Activated CD8-positive, alpha-beta T cell treated with anti-CD3 and anti-CD28 coated beads for 36 hours (primary cell): ENCODE measurements at regions of chr12 and their contacts with region 1.

Region 1: GRCh38 chr12:121443193-121443870 is 43.4 kb downstream of the RNF34 start:
- DNase-seq: peak; percentile 79
- ATAC-seq: peak; percentile 79
- H3K4me3 Mint-ChIP-seq: no peak overlapping the region
- H3K27ac Mint-ChIP-seq: peak overlapping the region; percentile 74
- H3K4me1 Mint-ChIP-seq: peaks cover 16% of the 10 kb centered on the region
- H3K27me3 Mint-ChIP-seq: no peaks in the 10 kb centered on the region
- CTCF ChIP-seq: peak; percentile 90

Region 2: GRCh38 chr12:121325922-121326396 is 117.4 kb before region 1 on chr12:
- CTCF ChIA-PET with region 1: interaction called, 80 read pairs
- POLR2A ChIA-PET with region 1: no interaction called
- intact Hi-C with region 1: loop called (anchors 10 kb)
- DNase-seq: no peak
- ATAC-seq: no peak
- H3K4me3 Mint-ChIP-seq: no peak overlapping the region
- H3K27ac Mint-ChIP-seq: no peak overlapping the region
- H3K4me1 Mint-ChIP-seq: no peaks in the 10 kb centered on the region
- H3K27me3 Mint-ChIP-seq: no peaks in the 10 kb centered on the region
- CTCF ChIP-seq: no peak

Region 3: GRCh38 chr12:121399391-121400331 is 43.7 kb before region 1 on chr12 and contains the start of gene RNF34:
- CTCF ChIA-PET with region 1: interaction called, 13 read pairs
- POLR2A ChIA-PET with region 1: interaction called, 4 read pairs
- intact Hi-C with region 1: no loop called
- DNase-seq: peak; percentile 99
- ATAC-seq: peak; percentile 92
- H3K4me3 Mint-ChIP-seq: peak within 1 kb of the TSS; percentile 85
- H3K27ac Mint-ChIP-seq: peak within 1 kb of the TSS; percentile 93
- H3K4me1 Mint-ChIP-seq: peaks cover 26% of the 10 kb centered on the region
- H3K27me3 Mint-ChIP-seq: no peaks in the 10 kb centered on the region
- CTCF ChIP-seq: no peak
- total RNA-seq, gene RNF34: 44.1 to 44.9 TPM

Region 4: DNA sequence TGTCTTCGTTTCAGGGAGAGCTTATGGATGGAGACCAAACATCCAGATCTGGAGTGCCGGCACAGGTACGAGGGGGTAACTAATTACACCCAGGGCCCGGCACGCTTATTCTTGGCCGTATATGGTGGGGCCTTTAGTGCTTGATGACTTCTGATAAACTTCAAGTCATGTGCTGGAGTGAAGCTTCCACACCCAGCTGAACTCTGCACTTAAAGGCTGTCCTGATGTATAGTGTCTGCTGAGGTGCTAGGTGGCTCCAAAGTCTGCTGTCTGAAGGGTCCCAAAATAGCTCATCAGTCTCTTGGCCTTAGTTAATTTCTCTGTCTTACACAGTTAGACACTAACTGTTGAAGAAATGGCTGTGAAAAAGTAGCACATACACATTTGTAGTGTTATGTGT is 25.5 kb before region 1 on chr12:
- CTCF ChIA-PET with region 1: interaction called, 19 read pairs
- POLR2A ChIA-PET with region 1: interaction called, 4 read pairs
- intact Hi-C with region 1: no loop called
- DNase-seq: no peak
- ATAC-seq: no peak
- H3K4me3 Mint-ChIP-seq: no peak overlapping the region
- H3K27ac Mint-ChIP-seq: no peak overlapping the region
- H3K4me1 Mint-ChIP-seq: peaks cover 17% of the 10 kb centered on the region
- H3K27me3 Mint-ChIP-seq: no peaks in the 10 kb centered on the region
- CTCF ChIP-seq: no peak

Region 5: GRCh38 chr12:121432740-121433480 is 10.4 kb before region 1 on chr12:
- CTCF ChIA-PET with region 1: interaction called, 75 read pairs
- POLR2A ChIA-PET with region 1: interaction called, 6 read pairs
- intact Hi-C with region 1: no loop called
- DNase-seq: no peak
- ATAC-seq: no peak
- H3K4me3 Mint-ChIP-seq: no peak overlapping the region
- H3K27ac Mint-ChIP-seq: peak overlapping the region; percentile 60
- H3K4me1 Mint-ChIP-seq: peaks cover 2% of the 10 kb centered on the region
- H3K27me3 Mint-ChIP-seq: no peaks in the 10 kb centered on the region
- CTCF ChIP-seq: no peak

Region 6: GRCh38 chr12:121461048-121461447 is 17.7 kb after region 1 on chr12:
- CTCF ChIA-PET with region 1: interaction called, 16 read pairs
- POLR2A ChIA-PET with region 1: interaction called, 5 read pairs
- intact Hi-C with region 1: no loop called
- DNase-seq: no peak
- ATAC-seq: no peak
- H3K4me3 Mint-ChIP-seq: no peak overlapping the region
- H3K27ac Mint-ChIP-seq: peak overlapping the region; percentile 11
- H3K4me1 Mint-ChIP-seq: peaks cover 63% of the 10 kb centered on the region
- H3K27me3 Mint-ChIP-seq: no peaks in the 10 kb centered on the region
- CTCF ChIP-seq: no peak

Region 7: DNA sequence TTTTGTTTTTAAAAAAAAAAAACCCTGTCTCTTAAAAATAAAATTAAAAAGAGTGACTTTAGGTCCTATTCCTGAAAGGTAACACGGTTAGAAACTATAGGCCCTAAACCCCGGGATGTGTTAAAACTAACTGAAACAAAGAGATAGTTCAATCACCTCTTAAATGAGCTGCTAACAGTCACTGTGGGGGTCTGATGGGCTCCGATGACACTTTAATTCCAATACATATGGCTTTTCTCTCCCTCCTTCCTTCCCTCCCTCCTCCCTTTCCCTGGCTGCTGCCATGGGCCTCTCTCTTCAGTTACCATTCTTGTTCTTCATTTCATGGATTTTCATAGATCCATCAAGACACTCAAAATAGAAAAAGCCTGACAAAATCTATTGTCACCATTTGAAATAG is 33.1 kb after region 1 on chr12:
- CTCF ChIA-PET with region 1: interaction called, 22 read pairs
- POLR2A ChIA-PET with region 1: no interaction called
- intact Hi-C with region 1: no loop called
- DNase-seq: no peak
- ATAC-seq: no peak
- H3K4me3 Mint-ChIP-seq: no peak overlapping the region
- H3K27ac Mint-ChIP-seq: no peak overlapping the region
- H3K4me1 Mint-ChIP-seq: peaks cover 2% of the 10 kb centered on the region
- H3K27me3 Mint-ChIP-seq: no peaks in the 10 kb centered on the region
- CTCF ChIP-seq: no peak

Region 8: DNA sequence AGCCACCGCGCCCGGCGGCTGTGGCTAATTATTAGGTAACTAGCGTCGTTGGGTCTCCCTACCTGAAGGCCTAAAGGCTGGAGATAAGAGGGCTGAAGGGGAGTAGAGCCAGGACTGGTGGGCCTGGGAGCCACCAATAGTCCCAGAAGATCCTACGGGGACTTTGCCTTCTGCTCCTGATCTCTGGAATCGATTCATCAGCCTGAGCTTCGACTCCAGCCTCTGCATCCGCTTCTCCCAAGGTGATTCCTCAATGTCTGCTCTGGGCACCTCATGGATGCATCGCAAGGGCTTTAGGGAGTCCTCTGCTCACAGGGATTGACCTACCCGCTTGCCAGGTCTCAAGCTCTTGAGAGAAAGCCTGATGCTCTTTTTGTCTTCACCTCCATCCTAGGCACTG is 152.2 kb after region 1 on chr12:
- CTCF ChIA-PET with region 1: no interaction called
- POLR2A ChIA-PET with region 1: no interaction called
- intact Hi-C with region 1: no loop called
- DNase-seq: no peak
- ATAC-seq: no peak
- H3K4me3 Mint-ChIP-seq: no peak overlapping the region
- H3K27ac Mint-ChIP-seq: no peak overlapping the region
- H3K4me1 Mint-ChIP-seq: peaks cover 22% of the 10 kb centered on the region
- H3K27me3 Mint-ChIP-seq: no peaks in the 10 kb centered on the region
- CTCF ChIP-seq: no peak

Region 9: DNA sequence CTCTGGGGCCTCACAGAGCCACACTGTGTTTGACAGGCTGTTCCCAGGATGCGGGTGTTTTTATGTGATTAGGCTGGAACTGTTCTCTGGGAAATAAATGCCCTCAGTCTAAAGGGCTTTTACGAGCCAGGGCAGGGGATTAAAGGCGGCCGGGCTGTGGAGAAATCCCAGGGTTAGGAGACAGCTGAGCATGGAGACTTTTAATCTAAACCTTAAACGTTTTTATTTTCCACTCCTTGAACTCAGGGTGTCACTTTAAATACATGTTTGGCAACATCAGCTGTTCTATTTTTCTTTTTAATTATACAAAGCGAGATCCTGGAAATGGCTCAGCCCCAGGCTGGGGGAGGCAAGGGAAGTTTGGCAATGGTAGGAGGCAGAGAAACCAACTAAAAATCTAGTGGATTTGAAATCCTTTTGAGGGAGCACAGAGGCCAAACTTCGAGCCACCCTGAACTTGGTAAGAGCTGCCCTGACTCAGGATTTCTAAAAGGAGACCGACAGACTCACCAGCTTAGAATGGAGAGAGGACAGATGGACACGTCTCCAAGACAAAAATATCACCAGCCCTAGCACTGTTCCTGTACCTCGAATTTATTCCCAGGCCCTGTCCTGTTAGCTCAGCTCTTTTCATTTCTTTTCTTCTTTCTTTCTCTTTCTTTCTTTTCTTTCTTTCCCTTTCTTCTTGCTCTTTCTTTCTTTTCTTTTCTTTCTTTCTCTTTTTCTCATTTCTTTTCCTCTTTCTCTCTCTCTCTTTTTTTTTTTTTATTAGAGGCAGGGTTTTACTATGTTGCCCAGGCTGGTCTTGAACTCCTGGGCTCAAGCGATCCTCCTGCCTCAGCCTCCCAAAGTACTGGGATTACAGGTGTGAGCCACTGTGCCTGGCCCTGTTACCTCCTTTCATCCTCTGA is 167.2 kb after region 1 on chr12:
- CTCF ChIA-PET with region 1: no interaction called
- POLR2A ChIA-PET with region 1: no interaction called
- intact Hi-C with region 1: no loop called
- DNase-seq: no peak
- ATAC-seq: no peak
- H3K4me3 Mint-ChIP-seq: no peak overlapping the region
- H3K27ac Mint-ChIP-seq: no peak overlapping the region
- H3K4me1 Mint-ChIP-seq: no peaks in the 10 kb centered on the region
- H3K27me3 Mint-ChIP-seq: no peaks in the 10 kb centered on the region
- CTCF ChIP-seq: peak; percentile 29

Region 10: DNA sequence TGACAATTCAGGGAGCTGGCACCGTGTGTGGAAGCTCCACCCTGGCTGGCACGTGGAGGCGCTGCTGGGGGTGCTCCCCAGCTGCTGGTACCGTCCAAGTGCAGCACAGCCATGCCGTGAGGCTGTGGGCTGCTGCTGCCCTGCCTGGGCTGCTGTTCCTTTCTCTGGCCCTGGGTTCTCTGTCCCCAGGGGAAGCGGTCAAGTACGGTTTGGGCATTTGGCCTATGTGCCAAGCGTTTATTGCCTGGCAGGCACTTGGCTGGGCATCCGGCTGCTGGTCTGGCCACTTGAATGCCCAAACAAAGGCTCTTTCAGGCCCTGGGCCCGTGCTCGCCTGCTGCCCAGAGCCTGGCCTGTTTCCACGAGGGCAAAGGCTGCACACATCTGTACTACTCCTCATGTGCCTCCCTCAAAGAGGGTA is 310.5 kb after region 1 on chr12:
- CTCF ChIA-PET with region 1: no interaction called
- POLR2A ChIA-PET with region 1: no interaction called
- intact Hi-C with region 1: no loop called
- DNase-seq: no peak
- ATAC-seq: no peak
- H3K4me3 Mint-ChIP-seq: no peak overlapping the region
- H3K27ac Mint-ChIP-seq: no peak overlapping the region
- H3K4me1 Mint-ChIP-seq: peaks cover 14% of the 10 kb centered on the region
- H3K27me3 Mint-ChIP-seq: no peaks in the 10 kb centered on the region
- CTCF ChIP-seq: no peak